Motor neuron (in vitro differentiated cells): ENCODE measurements at regions of chr11 and their contacts with region 1.

Region 1: DNA sequence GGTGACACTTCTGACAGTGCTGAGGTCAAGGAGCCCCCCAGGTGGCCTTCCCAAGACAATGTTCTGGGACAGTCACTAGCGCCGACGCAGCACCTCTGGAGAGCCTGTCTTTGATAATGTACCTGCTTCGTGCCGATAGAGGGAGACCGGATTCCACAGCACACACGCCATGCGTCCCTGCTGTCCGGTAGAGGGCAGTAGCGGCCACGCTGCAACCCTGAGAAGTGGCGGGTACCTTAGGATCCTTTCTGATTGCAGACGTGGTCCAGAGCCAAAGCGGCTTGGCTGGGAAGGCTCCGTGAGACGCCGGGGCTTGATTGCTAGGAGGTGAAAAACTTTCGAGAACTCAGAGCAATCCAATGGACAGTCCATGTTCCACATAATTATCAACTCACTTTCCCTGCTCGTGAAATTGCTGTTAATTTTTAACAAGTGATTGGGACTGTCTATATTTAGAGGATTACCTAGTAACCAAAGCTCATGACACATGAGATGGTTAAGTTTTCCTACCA is 11.4 kb upstream of the BARX2 start:
- ATAC-seq: peak; percentile 99 to 100 (median 100)
- H3K4me3 ChIP-seq: no peak overlapping the region
- H3K27ac ChIP-seq: no peak overlapping the region
- H3K4me1 ChIP-seq: no peaks in the 10 kb centered on the region

Region 2: GRCh38 chr11:128552783-128553661 is 811.2 kb before region 1 on chr11:
- in situ Hi-C with region 1: no loop called
- ATAC-seq: peak; percentile 30 to 79 (median 70)
- H3K4me3 ChIP-seq: no peak overlapping the region
- H3K27ac ChIP-seq: no peak overlapping the region
- H3K4me1 ChIP-seq: peaks cover 0 to 19% of the 10 kb centered on the region in 2 donors

Region 3: GRCh38 chr11:128841461-128842072 is 522.6 kb before region 1 on chr11:
- in situ Hi-C with region 1: no loop called
- ATAC-seq: no peak
- H3K4me3 ChIP-seq: no peak overlapping the region
- H3K27ac ChIP-seq: no peak overlapping the region
- H3K4me1 ChIP-seq: no peaks in the 10 kb centered on the region

Region 4: DNA sequence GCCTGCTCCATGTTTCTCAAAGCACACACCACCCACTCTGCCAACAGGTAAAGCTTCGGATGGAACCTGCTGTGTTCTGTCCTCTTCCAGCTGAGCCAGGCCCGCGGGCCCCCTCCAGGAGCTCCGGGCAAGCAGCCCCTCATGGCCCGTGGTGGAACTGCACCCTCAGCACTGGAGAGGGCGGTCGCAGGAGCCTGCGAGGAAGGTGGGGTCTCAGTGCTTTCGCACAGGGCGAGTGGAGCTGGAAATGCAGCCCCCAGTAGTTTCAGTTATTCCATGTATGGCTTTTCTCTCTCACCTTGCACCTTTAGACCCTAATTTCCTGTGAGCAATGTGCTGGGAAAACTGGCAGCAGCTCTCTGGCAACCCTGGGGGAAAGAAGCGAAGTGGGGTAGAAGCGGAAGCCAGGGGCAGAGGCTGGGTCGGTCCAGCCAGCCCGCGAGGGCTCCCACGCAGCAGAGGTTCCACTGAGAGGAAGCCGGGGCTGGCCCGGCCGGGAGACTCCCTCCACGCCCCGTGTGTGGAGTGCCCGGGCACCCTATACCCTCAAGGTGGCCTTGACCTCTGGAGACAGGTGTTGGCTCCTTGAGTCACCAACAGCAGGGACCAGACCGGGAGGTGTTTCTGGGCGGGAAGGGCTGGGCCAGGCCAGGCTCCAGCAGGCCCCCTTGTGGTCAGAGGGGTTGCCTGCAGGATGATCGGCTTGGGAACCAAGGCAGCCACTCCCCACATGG is 331.5 kb after region 1 on chr11:
- in situ Hi-C with region 1: no loop called
- ATAC-seq: peak; percentile 79 to 96 (median 85)
- H3K4me3 ChIP-seq: no peak overlapping the region
- H3K27ac ChIP-seq: no peak overlapping the region
- H3K4me1 ChIP-seq: no peaks in the 10 kb centered on the region

Region 5: DNA sequence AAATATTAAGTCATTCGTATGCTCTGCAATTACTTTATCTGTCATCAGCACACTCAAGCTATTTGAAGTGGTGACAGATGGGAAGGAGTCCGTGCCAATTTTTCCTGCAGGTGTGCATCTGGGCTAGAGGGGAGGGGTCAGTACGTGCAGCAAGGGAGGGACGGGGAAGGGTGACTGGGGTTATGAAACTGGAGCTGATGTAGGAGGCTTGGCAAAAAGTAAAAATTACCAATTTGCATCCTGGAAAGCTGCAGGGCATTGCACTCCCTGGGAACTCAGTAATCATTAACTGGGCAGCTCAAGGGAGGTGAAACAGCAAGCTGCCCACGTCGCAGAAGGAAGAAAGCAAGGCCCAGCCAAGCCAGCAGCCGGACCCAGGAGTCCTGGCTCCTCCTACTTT is 364.4 kb after region 1 on chr11:
- in situ Hi-C with region 1: loop called in 5 of 9 experiments (anchors 25 kb)
- ATAC-seq: no peak
- H3K4me3 ChIP-seq: no peak overlapping the region
- H3K27ac ChIP-seq: no peak overlapping the region
- H3K4me1 ChIP-seq: no peaks in the 10 kb centered on the region

Region 6: DNA sequence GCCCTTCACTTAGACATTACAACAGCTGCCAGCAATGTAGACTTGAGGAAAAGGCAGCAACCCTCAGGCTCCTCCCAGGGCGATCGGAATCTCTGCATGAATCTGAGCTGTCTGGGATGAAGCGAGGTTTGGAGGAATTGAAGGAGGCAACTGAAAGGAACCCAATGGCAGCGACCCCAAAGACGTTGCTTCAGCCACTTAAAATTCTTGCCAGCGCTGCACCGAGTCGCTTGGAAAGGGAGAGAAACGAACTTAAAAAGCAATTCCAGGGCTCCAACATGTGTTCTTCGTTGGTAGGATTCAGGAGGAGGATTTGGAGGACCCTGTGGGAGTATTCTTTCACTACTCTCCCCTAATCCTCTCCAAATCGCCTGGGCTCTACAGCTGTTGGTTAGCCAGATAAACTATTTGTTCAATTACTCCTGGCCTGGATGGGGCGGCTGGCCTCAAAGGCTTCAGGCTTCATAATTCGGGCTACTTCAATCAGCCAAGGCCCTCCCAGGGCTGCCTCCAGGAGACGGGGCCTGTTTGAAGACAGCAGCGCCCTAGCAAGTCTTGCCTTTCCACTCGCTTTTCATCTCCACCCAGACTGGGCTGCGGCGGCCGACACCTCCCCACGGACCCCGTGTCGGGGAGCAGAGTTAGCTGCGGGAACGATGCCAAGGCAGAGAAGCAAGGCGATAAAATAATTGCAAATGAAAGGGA is 379.1 kb after region 1 on chr11:
- in situ Hi-C with region 1: loop called in 6 of 9 experiments (anchors 10 to 25 kb)
- ATAC-seq: peak in 3 of 8 experiments; percentile 47 to 56 (median 48)
- H3K4me3 ChIP-seq: no peak overlapping the region
- H3K27ac ChIP-seq: no peak overlapping the region
- H3K4me1 ChIP-seq: no peaks in the 10 kb centered on the region